ENCODE measurements at regions of chr3 and their contacts with region 1.

Region 1: GRCh38 chr3:58414538-58415197 is 19.0 kb downstream of the PDHB start:
- DNase-seq: peak in 1 of 2 donors; percentile 76
- ATAC-seq: peak in 2 of 3 donors; percentile 78 to 97
- H3K4me3 ChIP-seq: no peak overlapping the region
- H3K4me3 Mint-ChIP-seq: no peak overlapping the region
- H3K27ac ChIP-seq: no peak overlapping the region
- H3K27ac Mint-ChIP-seq: peak overlapping the region; percentile 16 to 34
- H3K4me1 ChIP-seq: no peaks in the 10 kb centered on the region
- H3K4me1 Mint-ChIP-seq: peaks cover 6 to 15% of the 10 kb centered on the region in 2 donors
- H3K27me3 ChIP-seq: no peaks in the 10 kb centered on the region
- H3K27me3 Mint-ChIP-seq: no peaks in the 10 kb centered on the region
- CTCF ChIP-seq: peak; percentile 75

Region 2: GRCh38 chr3:58321791-58322190 is 92.9 kb before region 1 on chr3:
- intact Hi-C with region 1: loop called (anchors 1 kb)
- DNase-seq: no peak
- ATAC-seq: no peak
- H3K4me3 ChIP-seq: no peak overlapping the region
- H3K4me3 Mint-ChIP-seq: no peak overlapping the region
- H3K27ac ChIP-seq: no peak overlapping the region
- H3K27ac Mint-ChIP-seq: no peak overlapping the region
- H3K4me1 ChIP-seq: no peaks in the 10 kb centered on the region
- H3K4me1 Mint-ChIP-seq: no peaks in the 10 kb centered on the region
- H3K27me3 ChIP-seq: no peaks in the 10 kb centered on the region
- H3K27me3 Mint-ChIP-seq: no peaks in the 10 kb centered on the region
- CTCF ChIP-seq: no peak

Region 3: GRCh38 chr3:58353722-58354553 is 60.7 kb before region 1 on chr3:
- intact Hi-C with region 1: loop called (anchors 1 kb)
- DNase-seq: peak in 1 of 2 donors; percentile 62
- ATAC-seq: peak; percentile 72 to 74 (median 74)
- H3K4me3 ChIP-seq: peak overlapping the region; percentile 29
- H3K4me3 Mint-ChIP-seq: peak overlapping the region; percentile 87
- H3K27ac ChIP-seq: peak overlapping the region; percentile 69
- H3K27ac Mint-ChIP-seq: peak overlapping the region; percentile 89 to 95
- H3K4me1 ChIP-seq: peaks cover 68% of the 10 kb centered on the region
- H3K4me1 Mint-ChIP-seq: peaks cover 82 to 87% of the 10 kb centered on the region in 2 donors
- H3K27me3 ChIP-seq: no peaks in the 10 kb centered on the region
- H3K27me3 Mint-ChIP-seq: no peaks in the 10 kb centered on the region
- CTCF ChIP-seq: no peak